Ascending aorta (tissue), 2 donors: ENCODE measurements at regions of chr1 and their contacts with region 1.

Region 1: DNA sequence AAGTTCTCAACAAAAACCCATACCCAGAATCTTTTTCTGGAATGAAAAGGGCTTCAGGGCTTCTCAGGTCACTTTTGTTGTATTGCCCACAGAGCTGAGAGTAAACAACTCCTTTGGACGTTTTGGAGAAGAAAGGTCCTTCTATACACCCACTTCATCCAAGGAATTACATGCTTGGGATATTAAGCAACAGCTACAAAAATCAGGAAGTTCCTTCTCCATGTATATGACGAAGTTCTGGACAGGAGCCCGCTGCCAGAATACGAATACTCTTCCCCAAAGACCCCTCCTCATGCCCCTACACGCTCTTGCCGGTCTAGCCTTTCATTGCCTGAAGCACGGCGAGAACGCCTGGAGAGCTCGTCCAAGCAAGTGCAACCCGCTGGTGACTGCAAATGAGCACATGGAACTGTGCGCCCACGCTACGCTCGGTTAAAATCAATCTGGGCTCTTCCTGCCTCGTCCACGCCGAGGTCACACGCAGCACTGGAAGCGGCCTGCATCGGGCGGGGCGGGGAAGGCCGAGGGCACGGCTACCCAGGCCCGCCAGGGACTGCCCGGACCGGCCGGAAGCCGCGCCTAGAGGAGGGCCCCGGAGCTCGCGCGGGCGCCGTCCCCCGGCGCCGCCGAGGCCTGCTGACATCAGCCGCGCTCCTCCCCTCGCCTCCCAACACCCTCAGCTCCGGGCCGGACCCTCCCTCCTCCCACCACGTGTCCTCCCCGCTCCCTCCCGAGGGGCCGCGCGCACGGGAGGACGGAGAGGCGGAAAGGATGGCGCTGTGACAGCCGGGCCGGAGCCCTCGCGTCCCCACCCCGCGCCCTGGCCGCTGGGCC is at the start of gene POGK:
- DNase-seq: peak; percentile 66 to 95
- H3K4me3 ChIP-seq: peak within 1 kb of the TSS; percentile 74 to 80
- H3K27ac ChIP-seq: peak within 1 kb of the TSS; percentile 88 to 93
- H3K4me1 ChIP-seq: peaks cover 14 to 42% of the 10 kb centered on the region in 2 donors
- H3K27me3 ChIP-seq: no peaks in the 10 kb centered on the region
- CTCF ChIP-seq: no peak
- total RNA-seq, gene POGK: 10.2 TPM

Region 2: GRCh38 chr1:166673722-166674121 is 165.3 kb before region 1 on chr1:
- intact Hi-C with region 1: no loop called
- DNase-seq: no peak
- H3K4me3 ChIP-seq: no peak overlapping the region
- H3K27ac ChIP-seq: no peak overlapping the region
- H3K4me1 ChIP-seq: no peaks in the 10 kb centered on the region
- H3K27me3 ChIP-seq: no peaks in the 10 kb centered on the region
- CTCF ChIP-seq: no peak

Region 3: GRCh38 chr1:166875734-166876539 is 37.0 kb after region 1 on chr1 and contains the start of gene TADA1:
- intact Hi-C with region 1: loop called (anchors 1 kb)
- DNase-seq: peak; percentile 93 to 99
- H3K4me3 ChIP-seq: peak within 1 kb of the TSS; percentile 78 to 82
- H3K27ac ChIP-seq: peak within 1 kb of the TSS; percentile 84 to 88
- H3K4me1 ChIP-seq: peaks cover 5 to 7% of the 10 kb centered on the region in 2 donors
- H3K27me3 ChIP-seq: no peaks in the 10 kb centered on the region
- CTCF ChIP-seq: peak in 1 of 3 experiments; percentile 24
- total RNA-seq, gene TADA1: 12.8 TPM

Region 4: GRCh38 chr1:166975361-166976129 is 136.6 kb after region 1 on chr1 and contains the start of gene ILDR2:
- intact Hi-C with region 1: loop called (anchors 2 kb)
- DNase-seq: peak in 1 of 2 donors; percentile 68
- H3K4me3 ChIP-seq: peak within 1 kb of the TSS; percentile 84 to 95
- H3K27ac ChIP-seq: peak within 1 kb of the TSS in 1 of 2 donors; percentile 48
- H3K4me1 ChIP-seq: peaks cover 0 to 6% of the 10 kb centered on the region in 2 donors
- H3K27me3 ChIP-seq: no peaks in the 10 kb centered on the region
- CTCF ChIP-seq: no peak
- total RNA-seq, gene ILDR2: not detected

Region 5: DNA sequence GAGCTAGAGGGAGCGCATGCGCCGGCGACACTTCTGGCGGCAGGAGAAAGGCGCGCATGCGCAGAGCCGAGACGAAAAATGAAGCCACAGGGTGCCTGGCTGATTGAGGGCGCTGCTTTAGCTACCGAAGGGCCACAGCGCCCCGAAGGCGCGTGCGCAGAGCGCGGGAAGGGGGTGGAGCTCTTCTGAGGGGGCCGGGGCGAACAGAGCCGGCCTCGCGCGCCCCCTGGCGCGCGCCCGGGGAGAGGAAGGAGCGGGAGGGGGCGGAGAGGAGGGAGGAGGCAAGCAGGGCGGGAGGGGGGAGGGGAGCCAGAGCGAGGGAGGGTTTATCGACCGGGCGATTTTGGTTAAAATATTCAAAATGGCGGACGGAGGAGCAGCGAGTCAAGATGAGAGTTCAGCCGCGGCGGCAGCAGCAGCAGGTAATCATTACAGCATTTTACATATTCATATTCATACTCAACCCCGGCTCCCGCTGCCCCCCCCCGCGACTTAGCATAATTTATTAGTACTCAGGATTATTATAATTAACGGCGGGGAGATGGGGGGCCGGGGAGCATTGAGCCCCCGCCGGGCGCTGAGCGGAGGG is 381.6 kb after region 1 on chr1 and contains the start of gene POU2F1:
- intact Hi-C with region 1: loop called (anchors 2 kb)
- DNase-seq: peak; percentile 93 to 99
- H3K4me3 ChIP-seq: peak within 1 kb of the TSS; percentile 75 to 97
- H3K27ac ChIP-seq: peak within 1 kb of the TSS; percentile 93 to 98
- H3K4me1 ChIP-seq: peaks cover 0 to 7% of the 10 kb centered on the region in 2 donors
- H3K27me3 ChIP-seq: no peaks in the 10 kb centered on the region
- CTCF ChIP-seq: peak; percentile 70 to 77 (median 71)
- total RNA-seq, gene POU2F1: 3.0 TPM

Region 6: GRCh38 chr1:167454894-167455785 is 616.2 kb after region 1 on chr1:
- intact Hi-C with region 1: loop called (anchors 10 kb)
- DNase-seq: peak in 1 of 2 donors; percentile 84
- H3K4me3 ChIP-seq: peak overlapping the region; percentile 82 to 96
- H3K27ac ChIP-seq: peak overlapping the region; percentile 88 to 91
- H3K4me1 ChIP-seq: peaks cover 0 to 4% of the 10 kb centered on the region in 2 donors
- H3K27me3 ChIP-seq: no peaks in the 10 kb centered on the region
- CTCF ChIP-seq: no peak